Astrocyte of the cerebellum (primary cell): ENCODE measurements at regions of chr10 and their contacts with region 1.

Region 1: GRCh38 chr10:101889256-101890210 is 45.9 kb upstream of the KCNIP2 start:
- DNase-seq: peak; percentile 63
- H3K4me3 ChIP-seq: no peak overlapping the region
- CTCF ChIP-seq: peak; percentile 92

Region 2: GRCh38 chr10:101941871-101942270 is 52.3 kb after region 1 on chr10:
- in situ Hi-C with region 1: no loop called
- DNase-seq: peak; percentile 6
- H3K4me3 ChIP-seq: no peak overlapping the region
- CTCF ChIP-seq: no peak

Region 3: DNA sequence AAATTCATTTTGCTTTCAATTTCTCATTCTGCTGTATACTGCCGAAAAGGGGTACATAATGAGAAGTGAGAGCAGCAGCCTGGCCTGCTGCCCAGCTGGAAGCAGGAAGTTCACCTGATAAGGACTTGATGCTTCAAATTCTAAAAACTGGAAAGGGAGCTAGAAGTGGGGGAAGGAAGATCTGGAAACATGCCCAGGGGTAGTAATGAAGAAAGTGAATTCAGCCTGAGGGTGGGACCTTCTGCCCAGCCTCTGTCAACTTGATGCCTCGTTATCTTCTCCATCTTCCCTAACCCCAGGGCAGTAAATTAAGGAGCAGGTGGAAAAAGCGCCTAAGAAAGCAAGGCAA is 97.1 kb after region 1 on chr10:
- in situ Hi-C with region 1: loop called (anchors 25 kb)
- DNase-seq: no peak
- H3K4me3 ChIP-seq: no peak overlapping the region
- CTCF ChIP-seq: no peak